Activated naive CD4-positive, alpha-beta T cell treated with anti-CD3 and anti-CD28 coated beads for 36 hours (primary cell): ENCODE measurements at regions of chr20 and their contacts with region 1.

Region 1: DNA sequence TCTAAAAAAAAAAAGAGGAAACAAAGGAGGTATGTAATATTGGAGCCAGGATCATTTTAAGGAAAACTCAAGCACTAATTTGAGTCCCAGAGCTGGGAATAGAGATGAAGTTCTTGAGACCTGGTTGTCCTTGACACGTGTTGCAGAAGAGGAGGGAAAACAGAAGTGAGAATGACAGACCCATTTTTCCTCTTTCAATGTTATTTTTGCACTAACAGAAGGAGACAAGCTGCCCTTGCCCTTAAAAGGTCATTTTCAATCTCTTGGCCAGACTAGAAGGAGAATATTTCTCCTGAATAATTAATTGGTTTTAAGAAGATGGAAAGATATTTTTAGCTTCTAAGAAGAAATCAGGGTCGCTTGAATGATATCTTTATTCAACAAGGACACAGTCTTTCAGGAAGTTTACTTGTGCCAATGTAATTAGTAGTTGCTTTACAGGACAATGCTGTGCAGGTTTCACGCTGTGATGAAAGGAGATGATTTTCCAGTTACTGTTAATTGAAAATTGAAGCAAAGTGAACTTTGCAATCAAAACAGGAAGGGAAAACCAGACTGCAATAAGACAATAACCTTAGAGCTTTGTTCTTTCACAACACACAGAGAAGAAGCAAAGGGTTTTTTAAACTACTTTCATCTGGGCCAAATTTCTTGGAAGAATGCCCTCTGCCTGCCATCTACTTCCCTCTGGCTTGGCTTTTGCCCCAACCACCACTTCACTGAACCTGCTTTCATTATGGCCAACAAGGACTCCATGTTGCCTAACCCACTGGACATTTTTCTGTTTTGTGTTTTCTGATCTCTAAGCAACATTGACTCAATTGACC is 107.8 kb upstream of the SHLD1 start:
- DNase-seq: no peak
- H3K4me3 Mint-ChIP-seq: no peak overlapping the region
- H3K27ac Mint-ChIP-seq: no peak overlapping the region
- H3K4me1 Mint-ChIP-seq: peaks cover 42% of the 10 kb centered on the region
- H3K27me3 Mint-ChIP-seq: no peaks in the 10 kb centered on the region

Region 2: GRCh38 chr20:4383966-4384365 is 1258.4 kb before region 1 on chr20:
- CTCF ChIA-PET with region 1: no interaction called
- intact Hi-C with region 1: no loop called
- DNase-seq: no peak
- H3K4me3 Mint-ChIP-seq: no peak overlapping the region
- H3K27ac Mint-ChIP-seq: no peak overlapping the region
- H3K4me1 Mint-ChIP-seq: no peaks in the 10 kb centered on the region
- H3K27me3 Mint-ChIP-seq: peaks cover 26% of the 10 kb centered on the region

Region 3: GRCh38 chr20:5020760-5021159 is 621.6 kb before region 1 on chr20:
- CTCF ChIA-PET with region 1: no interaction called
- intact Hi-C with region 1: no loop called
- DNase-seq: no peak
- H3K4me3 Mint-ChIP-seq: no peak overlapping the region
- H3K27ac Mint-ChIP-seq: no peak overlapping the region
- H3K4me1 Mint-ChIP-seq: no peaks in the 10 kb centered on the region
- H3K27me3 Mint-ChIP-seq: no peaks in the 10 kb centered on the region

Region 4: DNA sequence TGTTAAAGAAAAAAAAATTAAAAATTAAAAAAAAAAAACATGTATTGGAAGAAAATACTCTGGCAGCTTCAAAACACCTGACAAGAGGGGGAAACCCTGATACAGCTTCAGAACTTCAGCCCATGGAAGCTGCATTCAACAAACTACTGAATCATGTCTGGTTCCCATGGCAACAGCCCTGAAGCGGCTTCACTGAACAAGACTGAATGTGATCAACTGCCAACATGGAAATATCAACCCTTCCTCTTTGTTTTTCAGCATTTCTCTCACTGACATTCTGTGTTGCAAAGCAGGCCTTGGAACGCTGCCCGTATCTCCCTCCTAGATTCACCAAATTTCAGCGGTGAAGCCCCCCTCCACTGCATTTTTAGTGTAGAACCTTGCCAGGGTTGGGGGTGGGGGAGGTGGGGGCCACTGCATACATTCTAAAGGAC is 16.6 kb after region 1 on chr20:
- CTCF ChIA-PET with region 1: interaction called, 6 read pairs
- intact Hi-C with region 1: loop called (anchors 1 kb)
- DNase-seq: peak; percentile 84
- H3K4me3 Mint-ChIP-seq: no peak overlapping the region
- H3K27ac Mint-ChIP-seq: no peak overlapping the region
- H3K4me1 Mint-ChIP-seq: peaks cover 18% of the 10 kb centered on the region
- H3K27me3 Mint-ChIP-seq: no peaks in the 10 kb centered on the region

Region 5: DNA sequence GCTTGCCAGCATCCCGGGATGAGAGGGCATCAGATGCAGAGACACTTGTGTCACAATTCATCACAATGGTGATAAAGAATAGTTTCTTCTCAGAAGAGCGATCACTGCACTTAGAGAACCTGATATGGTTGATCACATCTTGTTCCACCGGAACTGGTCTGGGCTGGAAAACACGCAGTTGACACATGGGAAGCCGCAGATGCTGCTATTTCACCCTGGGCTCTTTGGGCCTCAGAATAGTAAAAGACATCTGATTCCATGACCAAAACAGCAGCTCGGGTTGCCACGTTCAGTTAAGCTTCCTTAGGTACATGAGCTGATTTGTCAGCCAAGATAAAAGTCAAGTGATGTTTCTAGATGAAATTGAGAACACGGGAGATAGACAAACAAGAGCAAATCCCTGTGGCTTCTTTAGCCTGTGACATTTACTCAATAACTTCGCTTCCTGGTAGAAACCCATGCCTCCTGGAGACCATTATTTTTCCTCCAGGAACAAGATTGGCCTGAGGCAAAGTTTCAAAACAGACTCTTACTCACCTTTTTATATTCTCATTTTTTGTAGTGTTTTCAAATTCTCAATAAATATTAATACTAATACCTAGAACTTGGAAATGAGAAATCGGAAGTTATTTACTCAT is 248.5 kb after region 1 on chr20:
- CTCF ChIA-PET with region 1: no interaction called
- intact Hi-C with region 1: no loop called
- DNase-seq: no peak
- H3K4me3 Mint-ChIP-seq: no peak overlapping the region
- H3K27ac Mint-ChIP-seq: no peak overlapping the region
- H3K4me1 Mint-ChIP-seq: no peaks in the 10 kb centered on the region
- H3K27me3 Mint-ChIP-seq: peaks cover 5% of the 10 kb centered on the region